ENCODE measurements at regions of chr1 and their contacts with region 1.

Region 1: DNA sequence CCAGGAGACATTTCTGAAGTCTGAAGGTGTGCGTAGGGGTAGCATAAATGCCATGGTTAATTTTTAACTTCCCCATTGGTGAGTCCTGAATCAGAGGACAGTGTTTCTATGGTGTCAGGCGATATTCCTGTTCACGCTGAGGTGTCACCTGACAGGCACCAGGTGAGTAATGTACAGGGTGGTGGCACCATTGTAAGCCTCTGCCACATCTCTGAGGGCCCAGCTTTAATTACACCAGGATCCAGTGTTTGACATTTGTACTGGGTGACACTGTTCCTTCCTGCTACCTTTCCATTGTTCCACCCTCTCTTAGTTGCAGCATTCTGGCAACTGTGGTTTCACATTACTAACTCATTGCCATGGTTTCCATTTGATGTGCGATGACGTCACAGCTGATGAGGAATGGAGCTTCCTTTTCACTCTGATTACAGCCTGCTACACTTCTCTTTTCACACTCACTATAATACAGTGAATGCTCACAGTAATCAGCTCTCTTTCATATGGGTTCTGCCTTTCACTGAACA is 40.6 kb upstream of the MARK1 start:
- DNase-seq: peak; percentile 74
- ATAC-seq: peak; percentile 93
- H3K4me3 Mint-ChIP-seq: no peak overlapping the region
- H3K27ac Mint-ChIP-seq: no peak overlapping the region
- H3K4me1 Mint-ChIP-seq: peaks cover 4% of the 10 kb centered on the region
- H3K27me3 Mint-ChIP-seq: peaks cover 9% of the 10 kb centered on the region

Region 2: DNA sequence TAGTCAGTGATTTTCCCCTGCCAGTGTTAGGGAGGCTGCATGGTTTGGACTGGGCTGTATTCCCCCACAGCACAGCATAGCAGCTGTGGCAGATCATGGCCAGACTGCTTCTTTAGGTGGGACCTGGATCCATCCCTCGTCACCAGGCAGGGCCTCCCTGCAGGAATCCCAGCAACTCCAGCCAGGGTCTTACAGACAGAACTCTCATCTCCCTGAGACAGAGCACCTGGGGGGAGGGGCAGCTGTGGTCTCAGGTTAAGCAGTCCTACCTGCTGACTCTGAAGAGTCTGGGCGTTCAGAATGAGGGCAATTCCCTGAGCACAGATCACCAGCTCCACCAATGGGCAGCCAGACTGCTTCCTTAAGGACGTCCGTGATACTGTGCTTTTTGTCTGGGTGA is 154.9 kb after region 1 on chr1:
- CTCF ChIA-PET with region 1: no interaction called
- POLR2A ChIA-PET with region 1: no interaction called
- intact Hi-C with region 1: no loop called
- DNase-seq: no peak
- ATAC-seq: no peak
- H3K4me3 Mint-ChIP-seq: no peak overlapping the region
- H3K27ac Mint-ChIP-seq: no peak overlapping the region
- H3K4me1 Mint-ChIP-seq: no peaks in the 10 kb centered on the region
- H3K27me3 Mint-ChIP-seq: peaks cover 6% of the 10 kb centered on the region

Region 3: GRCh38 chr1:222413436-222413835 is 1926.1 kb after region 1 on chr1:
- CTCF ChIA-PET with region 1: no interaction called
- POLR2A ChIA-PET with region 1: no interaction called
- intact Hi-C with region 1: loop called in 1 of 2 experiments (anchors 10 kb)
- DNase-seq: no peak
- ATAC-seq: no peak
- H3K4me3 Mint-ChIP-seq: no peak overlapping the region
- H3K27ac Mint-ChIP-seq: no peak overlapping the region
- H3K4me1 Mint-ChIP-seq: peaks cover 23% of the 10 kb centered on the region
- H3K27me3 Mint-ChIP-seq: no peaks in the 10 kb centered on the region